ENCODE measurements at regions of chr13 and their contacts with region 1.

Region 1: DNA sequence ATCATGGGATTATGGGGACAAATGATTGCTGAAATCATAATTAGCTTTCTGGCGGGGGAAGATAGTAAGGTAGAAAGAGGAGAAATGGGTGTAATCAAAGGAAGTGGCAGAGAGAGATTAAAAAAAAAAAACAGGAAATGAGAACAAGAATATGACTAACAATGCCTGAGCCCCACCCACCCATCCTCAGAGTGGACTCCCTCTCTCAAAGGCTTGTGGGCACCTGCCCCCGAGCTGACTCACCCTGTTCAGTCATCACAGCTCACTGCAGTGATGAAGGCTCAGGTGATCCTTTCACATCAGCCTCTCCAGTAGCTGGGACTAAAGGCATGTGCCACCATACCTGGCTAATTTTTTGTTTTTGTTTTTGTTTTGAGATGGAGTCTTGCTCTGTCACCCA is 26.4 kb upstream of the TPT1 start:
- DNase-seq: peak; percentile 93
- ATAC-seq: peak; percentile 96
- H3K4me3 ChIP-seq: no peak overlapping the region
- H3K27ac ChIP-seq: peak overlapping the region; percentile 69
- H3K4me1 ChIP-seq: peaks cover 33% of the 10 kb centered on the region
- H3K27me3 ChIP-seq: no peaks in the 10 kb centered on the region
- CTCF ChIP-seq: no peak

Region 2: DNA sequence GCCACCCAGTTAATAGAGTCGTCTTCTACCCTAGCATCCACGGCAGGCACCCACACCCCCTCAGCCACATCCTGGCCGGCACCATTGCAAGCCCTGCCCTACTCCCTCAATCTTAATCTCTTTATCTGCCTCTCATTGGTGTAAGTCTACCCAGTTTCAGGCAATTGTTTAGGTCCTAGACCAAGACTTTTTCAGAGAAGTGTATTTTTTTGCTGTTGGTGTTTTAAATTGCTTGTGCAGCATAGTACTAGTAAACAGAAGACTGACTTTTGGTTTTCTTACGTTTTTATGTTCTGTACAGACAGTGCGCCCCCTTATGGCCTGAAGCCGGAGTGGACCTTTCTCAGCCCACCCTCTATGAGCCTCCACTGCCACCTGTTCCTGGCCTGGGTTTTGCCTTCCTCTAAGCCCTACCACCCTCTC is 816.9 kb after region 1 on chr13:
- CTCF ChIA-PET with region 1: no interaction called
- POLR2A ChIA-PET with region 1: interaction called, 10 read pairs
- intact Hi-C with region 1: no loop called
- DNase-seq: peak; percentile 43
- ATAC-seq: no peak; the same call in 1 of the 2 replicates
- H3K4me3 ChIP-seq: no peak overlapping the region
- H3K27ac ChIP-seq: no peak overlapping the region
- H3K4me1 ChIP-seq: 0 out of 2 replicates have a peak, but pooled peaks cover 5% of the 10 kb centered on the region
- H3K27me3 ChIP-seq: no peaks in the 10 kb centered on the region
- CTCF ChIP-seq: peak; percentile 70